Cardiac septum (tissue), 1 donor: ENCODE measurements at regions of chr1 and their contacts with region 1.

Region 1: DNA sequence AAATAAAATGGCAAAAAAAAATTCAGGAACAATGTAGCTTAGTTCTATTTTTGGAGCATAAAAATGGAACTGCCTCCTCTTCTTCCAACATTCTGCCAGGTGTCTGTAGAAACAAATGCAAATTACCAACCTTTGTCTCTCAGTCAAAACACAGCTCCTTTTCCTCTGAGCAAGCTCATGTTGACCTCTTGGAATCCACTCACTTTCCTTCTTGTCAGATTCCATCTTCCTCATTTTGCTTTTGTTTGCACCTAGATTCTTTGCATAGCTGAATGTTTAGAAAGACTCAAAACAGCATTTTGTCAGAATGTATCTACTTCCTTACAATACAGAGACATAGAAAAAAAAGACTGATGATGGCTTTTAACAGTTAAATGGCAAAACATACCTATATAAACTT is 178.2 kb downstream of the ADGRL2 start:
- DNase-seq: no peak

Region 2: DNA sequence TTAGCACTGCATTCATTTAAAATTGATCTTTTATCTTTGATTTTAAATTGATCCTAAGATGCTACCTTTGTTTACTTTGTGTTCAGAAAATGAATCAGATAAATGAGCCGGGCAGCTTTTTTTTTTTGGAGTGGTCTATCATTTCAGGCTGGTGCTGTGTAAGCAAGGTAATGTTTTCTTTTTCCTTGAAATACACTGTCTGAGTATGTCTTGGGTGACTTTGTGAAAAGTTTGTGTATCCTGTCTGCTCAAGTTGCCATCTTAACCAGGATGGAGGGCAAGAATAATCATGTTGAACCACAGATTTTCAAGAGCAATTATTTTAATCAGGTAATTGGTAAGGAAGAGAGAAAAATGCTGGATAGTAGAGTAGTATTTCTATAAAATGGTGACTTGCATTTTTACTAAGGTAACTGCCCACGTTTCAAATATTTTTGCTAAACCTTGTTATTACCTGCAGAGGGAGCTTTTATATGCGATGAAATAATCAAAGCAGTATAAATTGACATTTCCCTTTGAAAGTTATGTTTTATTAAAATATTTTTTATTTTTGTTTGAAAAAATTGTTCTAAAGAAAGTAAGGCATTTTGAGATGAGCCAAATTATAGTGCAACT is 167.1 kb before region 1 on chr1:
- intact Hi-C with region 1: loop called (anchors 10 kb)
- DNase-seq: no peak

Region 3: DNA sequence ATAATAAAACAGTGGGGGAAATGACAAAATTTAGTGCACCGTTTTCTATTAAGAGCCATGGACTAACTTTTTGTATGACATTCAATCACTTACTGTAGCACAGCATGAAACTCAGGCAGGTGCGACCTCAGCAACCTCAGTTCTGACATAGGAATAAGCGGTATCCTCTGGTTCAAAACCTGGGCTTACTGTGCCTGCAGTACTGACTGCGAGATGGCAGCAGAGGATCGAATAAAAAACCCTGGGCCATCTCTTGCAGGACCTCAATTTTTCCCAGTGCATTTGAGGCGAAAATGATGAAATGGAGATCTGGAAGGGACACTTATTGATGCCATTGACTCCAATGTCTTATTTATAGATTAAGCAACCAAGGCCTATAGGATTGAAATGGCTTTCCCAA is 36.5 kb after region 1 on chr1:
- intact Hi-C with region 1: no loop called
- DNase-seq: no peak